K562 (cell line): ENCODE measurements at regions of chr5 and their contacts with region 1.

Region 1: GRCh38 chr5:160439205-160439600 is 17.5 kb downstream of the PTTG1 start:
- DNase-seq: peak; percentile 84 to 87 (median 86)
- ATAC-seq: peak; percentile 96
- H3K4me3 ChIP-seq: peak overlapping the region; percentile 33
- H3K27ac ChIP-seq: no peak overlapping the region
- H3K4me1 ChIP-seq: peaks cover 8 to 14% of the 10 kb centered on the region in 2 experiments; a peak in 4 of 5 replicates
- H3K27me3 ChIP-seq: no peaks in the 10 kb centered on the region; a peak in 1 of 5 replicates
- CTCF ChIP-seq: peak; percentile 87 to 95 (median 87)
- EP300 ChIP-seq: no peak
- POLR2A ChIP-seq: no peak
- RAD21 ChIP-seq: peak; percentile 48 to 68

Region 2: GRCh38 chr5:159642379-159642778 is 796.8 kb before region 1 on chr5:
- CTCF ChIA-PET with region 1: no interaction called
- POLR2A ChIA-PET with region 1: no interaction called
- in situ Hi-C with region 1: no loop called
- intact Hi-C with region 1: no loop called
- DNase-seq: no peak
- ATAC-seq: no peak
- H3K4me3 ChIP-seq: no peak overlapping the region
- H3K27ac ChIP-seq: no peak overlapping the region
- H3K4me1 ChIP-seq: peaks cover 4 to 9% of the 10 kb centered on the region in 2 experiments; a peak in 3 of 5 replicates
- H3K27me3 ChIP-seq: no peaks in the 10 kb centered on the region
- CTCF ChIP-seq: peak in 2 of 3 experiments; percentile 16 to 30; a peak in 2 of 6 replicates
- EP300 ChIP-seq: no peak
- POLR2A ChIP-seq: no peak
- RAD21 ChIP-seq: peak in 1 of 2 experiments; percentile 29; a peak in 2 of 4 replicates

Region 3: GRCh38 chr5:160421625-160422258 is 17.5 kb before region 1 on chr5 and contains the start of gene PTTG1:
- CTCF ChIA-PET with region 1: no interaction called
- POLR2A ChIA-PET with region 1: interaction called, 12 read pairs
- in situ Hi-C with region 1: no loop called
- intact Hi-C with region 1: no loop called
- DNase-seq: peak; percentile 89 to 99 (median 92)
- ATAC-seq: peak; percentile 88
- H3K4me3 ChIP-seq: peak within 1 kb of the TSS; percentile 60
- H3K27ac ChIP-seq: peak within 1 kb of the TSS; percentile 90
- H3K4me1 ChIP-seq: peaks cover 4 to 20% of the 10 kb centered on the region in 2 experiments; a peak in 4 of 5 replicates
- H3K27me3 ChIP-seq: no peaks in the 10 kb centered on the region
- CTCF ChIP-seq: no peak
- EP300 ChIP-seq: no peak
- POLR2A ChIP-seq: peak; percentile 94
- RAD21 ChIP-seq: no peak
- polyA plus RNA-seq, gene PTTG1: 1,025 to 1,088 TPM

Region 4: DNA sequence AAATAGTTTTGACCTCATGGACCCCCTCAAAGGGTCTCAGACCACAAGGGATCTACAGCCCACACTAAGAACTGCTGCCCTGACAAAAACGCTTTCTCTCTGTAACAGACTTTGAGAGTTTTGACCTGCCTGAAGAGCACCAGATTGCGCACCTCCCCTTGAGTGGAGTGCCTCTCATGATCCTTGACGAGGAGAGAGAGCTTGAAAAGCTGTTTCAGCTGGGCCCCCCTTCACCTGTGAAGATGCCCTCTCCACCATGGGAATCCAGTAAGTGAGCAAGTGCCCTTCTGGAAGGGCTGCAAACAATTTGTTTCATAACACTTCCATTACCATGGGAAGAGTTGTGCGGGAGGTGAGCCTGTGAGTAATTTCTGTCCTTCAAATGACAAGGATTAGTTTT is 11.6 kb before region 1 on chr5:
- CTCF ChIA-PET with region 1: no interaction called
- POLR2A ChIA-PET with region 1: interaction called, 12 read pairs
- in situ Hi-C with region 1: no loop called
- intact Hi-C with region 1: no loop called
- DNase-seq: no peak
- ATAC-seq: no peak
- H3K4me3 ChIP-seq: no peak overlapping the region
- H3K27ac ChIP-seq: no peak overlapping the region
- H3K4me1 ChIP-seq: peaks cover 0 to 15% of the 10 kb centered on the region in 2 experiments; a peak in 2 of 5 replicates
- H3K27me3 ChIP-seq: no peaks in the 10 kb centered on the region
- CTCF ChIP-seq: no peak
- EP300 ChIP-seq: no peak
- POLR2A ChIP-seq: no peak
- RAD21 ChIP-seq: no peak